ENCODE measurements at regions of chr17 and their contacts with region 1.

Region 1: DNA sequence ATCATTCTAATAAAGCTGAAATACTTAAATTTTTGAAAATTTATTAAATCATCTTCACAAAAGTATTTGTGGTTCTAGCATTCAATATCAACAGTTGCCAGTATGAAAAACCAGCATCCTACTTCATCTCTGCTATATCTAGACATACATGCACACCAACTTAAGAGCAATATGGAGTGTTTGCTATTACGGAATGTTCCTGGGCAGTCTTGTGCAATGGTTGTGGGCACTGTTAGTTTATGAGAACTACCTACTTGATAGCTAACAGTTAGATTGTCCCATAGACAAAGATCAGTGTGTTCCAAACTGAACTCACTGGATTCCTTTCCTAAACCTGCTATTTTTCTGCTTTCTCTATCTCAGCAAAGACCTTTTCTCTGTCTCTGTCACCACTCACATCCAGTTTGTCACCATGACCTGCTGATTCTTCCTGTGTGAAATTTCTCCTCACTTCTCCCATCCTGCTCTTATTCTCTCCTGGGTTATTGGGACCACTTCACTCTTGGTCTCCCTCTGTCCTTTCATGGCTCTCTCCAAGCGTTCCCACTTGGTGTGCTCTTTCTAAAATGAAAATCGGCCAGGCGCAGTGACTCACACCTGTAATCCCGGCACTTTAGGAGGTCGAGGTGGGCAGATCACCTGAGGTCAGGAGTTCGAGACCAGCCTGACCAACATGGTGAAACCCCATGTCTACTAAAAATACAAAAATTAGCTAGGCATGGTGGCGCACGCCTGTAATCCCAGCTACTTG is 27.7 kb downstream of the CNTROB start:
- DNase-seq: no peak
- ATAC-seq: no peak
- H3K4me3 ChIP-seq: no peak overlapping the region
- H3K4me3 Mint-ChIP-seq: no peak overlapping the region
- H3K27ac ChIP-seq: no peak overlapping the region
- H3K27ac Mint-ChIP-seq: no peak overlapping the region
- H3K4me1 ChIP-seq: no peaks in the 10 kb centered on the region
- H3K4me1 Mint-ChIP-seq: no peaks in the 10 kb centered on the region
- H3K27me3 ChIP-seq: no peaks in the 10 kb centered on the region
- H3K27me3 Mint-ChIP-seq: peaks cover 0 to 22% (median 0%) of the 10 kb centered on the region in 5 donors

Region 2: DNA sequence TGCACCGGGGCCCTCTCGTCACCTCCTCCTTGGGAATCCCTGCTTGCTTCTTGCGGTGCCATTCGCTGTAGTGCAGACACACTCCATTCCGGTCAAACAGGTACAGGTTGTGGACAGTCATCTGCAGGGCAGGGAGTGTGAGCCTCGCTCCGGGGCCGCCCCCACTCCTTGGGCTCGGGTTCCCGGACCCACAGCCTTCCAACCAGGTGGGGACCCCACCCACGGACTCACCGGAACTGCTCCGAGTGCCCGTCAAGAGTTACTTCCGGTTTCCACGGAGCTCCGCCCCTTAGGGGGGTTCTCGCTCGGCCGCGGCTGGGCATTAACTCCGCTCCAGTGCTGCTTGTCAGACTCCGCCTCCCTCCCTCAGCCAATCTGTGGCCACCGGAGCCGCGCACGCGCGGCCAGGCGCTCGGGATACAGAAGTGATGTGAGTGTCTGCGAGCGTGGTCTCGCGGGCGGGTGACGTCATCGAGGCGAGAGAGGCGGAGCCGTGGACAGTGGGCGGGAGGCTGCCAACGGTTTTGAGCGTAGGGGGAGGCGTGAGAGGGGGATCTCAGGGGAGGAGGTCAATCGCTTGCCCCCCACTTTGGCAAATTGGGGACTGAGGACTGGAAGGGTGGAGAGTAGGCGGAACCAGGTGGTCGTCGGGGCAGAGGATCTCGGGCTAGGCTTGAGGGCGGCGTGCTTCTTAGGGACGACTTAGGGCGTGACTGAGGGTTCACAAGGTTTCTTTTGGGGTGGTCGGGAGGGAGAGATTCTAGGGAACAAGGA is 27.8 kb before region 1 on chr17 and contains the starts of genes CNTROB and TRAPPC1:
- CTCF ChIA-PET with region 1: no interaction called
- POLR2A ChIA-PET with region 1: no interaction called
- intact Hi-C with region 1: no loop called
- DNase-seq: peak; percentile 97 to 100 (median 99)
- ATAC-seq: peak; percentile 98
- H3K4me3 ChIP-seq: peak within 1 kb of the TSS; percentile 66
- H3K4me3 Mint-ChIP-seq: peak within 1 kb of the TSS; percentile 95 to 100 (median 96)
- H3K27ac ChIP-seq: peak within 1 kb of the TSS; percentile 88
- H3K27ac Mint-ChIP-seq: peak within 1 kb of the TSS; percentile 82 to 99 (median 96)
- H3K4me1 ChIP-seq: peaks cover 20 to 28% of the 10 kb centered on the region in 2 donors
- H3K4me1 Mint-ChIP-seq: peaks cover 31 to 60% (median 54%) of the 10 kb centered on the region in 7 donors
- H3K27me3 ChIP-seq: no peaks in the 10 kb centered on the region
- H3K27me3 Mint-ChIP-seq: no peaks in the 10 kb centered on the region
- total RNA-seq, gene CNTROB: 29.0 to 50.5 (median 33.6) TPM
- total RNA-seq, gene TRAPPC1: 71.4 to 216 (median 103) TPM

Region 3: DNA sequence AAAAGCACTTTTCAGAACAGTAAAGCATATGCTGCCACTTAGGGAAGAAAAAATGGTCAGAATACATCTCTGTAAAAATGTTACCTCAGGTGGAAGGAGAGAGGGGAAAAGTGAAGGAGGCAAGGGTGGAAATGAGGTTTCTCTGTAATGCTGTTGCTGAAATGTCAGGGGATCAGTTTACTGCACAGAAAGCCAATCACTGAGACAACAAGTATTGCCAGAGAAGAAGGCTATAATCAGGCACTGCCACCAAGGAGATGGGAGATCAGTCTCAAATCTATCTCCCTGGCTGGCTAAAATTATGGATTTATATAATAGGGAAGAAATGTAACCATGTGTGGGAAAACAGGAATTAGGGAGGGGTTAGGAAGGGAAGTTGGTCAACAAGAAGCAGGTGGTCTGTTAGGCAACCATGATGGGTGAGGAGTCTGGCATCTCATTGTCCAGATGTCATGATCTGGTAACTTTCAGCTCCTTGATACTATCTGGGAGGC is 15.0 kb after region 1 on chr17:
- CTCF ChIA-PET with region 1: no interaction called
- POLR2A ChIA-PET with region 1: no interaction called
- intact Hi-C with region 1: loop called in 1 of 2 experiments (anchors 2 kb)
- DNase-seq: no peak
- ATAC-seq: no peak
- H3K4me3 ChIP-seq: no peak overlapping the region
- H3K4me3 Mint-ChIP-seq: peak overlapping the region in 1 of 10 donors; percentile 0
- H3K27ac ChIP-seq: no peak overlapping the region
- H3K27ac Mint-ChIP-seq: no peak overlapping the region
- H3K4me1 ChIP-seq: no peaks in the 10 kb centered on the region
- H3K4me1 Mint-ChIP-seq: no peaks in the 10 kb centered on the region
- H3K27me3 ChIP-seq: peaks cover 0 to 4% of the 10 kb centered on the region in 2 donors
- H3K27me3 Mint-ChIP-seq: peaks cover 0 to 23% (median 0%) of the 10 kb centered on the region in 5 donors